ENCODE measurements at regions of chr1 and their contacts with region 1.

Region 1: GRCh38 chr1:70143048-70143659 is 62.2 kb downstream of the LRRC40 start:
- DNase-seq: no peak
- ATAC-seq: no peak
- H3K4me3 ChIP-seq: no peak overlapping the region
- H3K27ac ChIP-seq: no peak overlapping the region
- H3K4me1 ChIP-seq: no peaks in the 10 kb centered on the region; the same call in 1 of the 2 replicates
- H3K27me3 ChIP-seq: no peaks in the 10 kb centered on the region
- CTCF ChIP-seq: peak; percentile 10; the same call in 1 of the 2 replicates

Region 2: DNA sequence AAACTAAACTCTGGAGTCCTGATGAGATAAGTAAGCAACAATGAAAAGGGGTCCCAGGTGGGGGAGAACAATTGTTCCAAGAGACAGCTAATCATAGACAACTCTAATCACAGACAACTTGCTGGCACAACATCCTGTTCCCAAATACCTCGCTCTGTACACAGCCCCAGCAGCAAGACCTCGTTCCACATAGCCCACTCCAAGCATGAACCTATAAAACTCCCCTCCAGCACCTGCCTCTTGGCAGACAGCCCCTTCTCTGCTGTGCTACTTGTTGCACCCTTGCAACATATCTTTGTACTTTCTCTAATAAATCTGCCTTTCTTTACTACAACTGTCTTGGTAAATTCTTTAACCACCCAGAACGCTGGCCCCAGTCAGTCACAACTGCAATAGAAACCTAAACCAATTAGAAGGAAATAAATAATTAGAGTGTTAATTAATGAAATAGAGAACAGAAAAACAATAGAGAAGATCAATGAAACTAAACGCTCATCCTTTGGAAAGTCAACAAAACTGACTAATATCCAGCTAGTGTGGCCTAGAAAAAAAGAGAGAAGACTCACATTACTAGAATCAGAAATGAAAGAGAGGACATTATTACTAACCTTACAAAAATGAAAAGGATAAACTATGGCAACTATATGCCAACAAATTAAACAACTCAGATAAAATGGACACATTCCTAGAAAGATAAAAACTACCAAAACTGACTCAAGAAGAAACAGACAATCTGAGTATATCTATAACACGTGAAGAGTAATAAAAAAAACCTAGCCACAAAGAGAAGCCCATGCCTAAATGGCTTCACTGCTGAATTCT is 26.1 kb after region 1 on chr1:
- CTCF ChIA-PET with region 1: no interaction called
- POLR2A ChIA-PET with region 1: no interaction called
- in situ Hi-C with region 1: no loop called
- intact Hi-C with region 1: no loop called
- DNase-seq: no peak
- ATAC-seq: no peak
- H3K4me3 ChIP-seq: no peak overlapping the region
- H3K27ac ChIP-seq: no peak overlapping the region
- H3K4me1 ChIP-seq: no peaks in the 10 kb centered on the region
- H3K27me3 ChIP-seq: no peaks in the 10 kb centered on the region
- CTCF ChIP-seq: no peak

Region 3: DNA sequence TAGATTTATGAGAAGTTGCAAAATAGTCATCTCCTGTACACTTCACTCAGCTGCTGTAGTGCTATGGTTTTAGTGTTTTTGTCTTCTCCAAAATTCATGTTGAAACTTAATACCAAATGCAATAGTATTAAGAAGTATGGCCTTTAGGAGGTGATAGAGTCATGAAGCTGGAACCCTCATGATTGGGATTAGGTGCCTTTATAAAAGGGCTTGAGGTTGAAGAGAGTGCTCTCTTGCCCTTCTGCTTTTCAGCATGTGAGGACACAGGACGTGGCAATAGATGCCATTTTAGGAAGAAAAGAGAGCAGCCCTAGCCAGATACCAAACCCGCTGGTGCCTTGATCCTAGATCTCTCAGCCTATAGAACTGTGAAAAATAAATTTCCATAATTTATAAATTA is 355.5 kb after region 1 on chr1:
- CTCF ChIA-PET with region 1: no interaction called
- POLR2A ChIA-PET with region 1: interaction called, 16 read pairs
- in situ Hi-C with region 1: no loop called
- intact Hi-C with region 1: no loop called
- DNase-seq: no peak
- ATAC-seq: no peak
- H3K4me3 ChIP-seq: no peak overlapping the region
- H3K27ac ChIP-seq: no peak overlapping the region
- H3K4me1 ChIP-seq: no peaks in the 10 kb centered on the region
- H3K27me3 ChIP-seq: no peaks in the 10 kb centered on the region
- CTCF ChIP-seq: no peak